MCF 10A (cell line): ENCODE measurements at regions of chr22 and their contacts with region 1.

Region 1: GRCh38 chr22:36546092-36546804 is 17.3 kb upstream of the EIF3D start:
- DNase-seq: peak; percentile 54
- H3K4me3 Mint-ChIP-seq: no peak overlapping the region
- H3K27ac Mint-ChIP-seq: no peak overlapping the region
- H3K4me1 Mint-ChIP-seq: peaks cover 22% of the 10 kb centered on the region
- H3K27me3 Mint-ChIP-seq: peaks cover 17% of the 10 kb centered on the region
- CTCF ChIP-seq: peak; percentile 78

Region 2: DNA sequence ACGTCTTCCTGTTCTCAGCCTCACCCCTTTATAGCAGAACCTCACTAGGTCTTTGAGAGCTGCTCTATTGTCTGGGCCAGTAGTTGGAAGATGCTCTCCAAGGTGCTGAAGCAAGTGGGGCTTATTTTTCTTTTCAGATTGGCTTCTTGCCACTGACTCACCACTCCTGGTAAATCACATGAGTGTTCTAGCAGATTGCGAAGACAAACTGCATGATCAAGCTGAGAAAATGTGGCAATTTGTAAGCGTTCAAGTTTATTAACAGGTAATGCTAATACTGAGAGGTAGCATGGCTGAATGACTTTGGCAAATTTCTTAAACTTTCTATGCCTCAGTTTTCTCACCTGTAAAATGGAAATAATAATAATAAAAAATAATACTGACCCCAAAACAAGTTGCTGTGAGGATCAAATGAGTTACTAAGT is 98.1 kb after region 1 on chr22:
- CTCF ChIA-PET with region 1: interaction called, 4 read pairs
- POLR2A ChIA-PET with region 1: interaction called, 6 read pairs
- intact Hi-C with region 1: loop called (anchors 5 kb)
- DNase-seq: peak; percentile 95
- H3K4me3 Mint-ChIP-seq: no peak overlapping the region
- H3K27ac Mint-ChIP-seq: no peak overlapping the region
- H3K4me1 Mint-ChIP-seq: peaks cover 19% of the 10 kb centered on the region
- H3K27me3 Mint-ChIP-seq: peaks cover 75% of the 10 kb centered on the region
- CTCF ChIP-seq: no peak

Region 3: GRCh38 chr22:36689583-36689982 is 143.3 kb after region 1 on chr22:
- CTCF ChIA-PET with region 1: no interaction called
- POLR2A ChIA-PET with region 1: no interaction called
- intact Hi-C with region 1: no loop called
- DNase-seq: no peak
- H3K4me3 Mint-ChIP-seq: no peak overlapping the region
- H3K27ac Mint-ChIP-seq: no peak overlapping the region
- H3K4me1 Mint-ChIP-seq: no peaks in the 10 kb centered on the region
- H3K27me3 Mint-ChIP-seq: peaks cover 89% of the 10 kb centered on the region
- CTCF ChIP-seq: no peak

Region 4: DNA sequence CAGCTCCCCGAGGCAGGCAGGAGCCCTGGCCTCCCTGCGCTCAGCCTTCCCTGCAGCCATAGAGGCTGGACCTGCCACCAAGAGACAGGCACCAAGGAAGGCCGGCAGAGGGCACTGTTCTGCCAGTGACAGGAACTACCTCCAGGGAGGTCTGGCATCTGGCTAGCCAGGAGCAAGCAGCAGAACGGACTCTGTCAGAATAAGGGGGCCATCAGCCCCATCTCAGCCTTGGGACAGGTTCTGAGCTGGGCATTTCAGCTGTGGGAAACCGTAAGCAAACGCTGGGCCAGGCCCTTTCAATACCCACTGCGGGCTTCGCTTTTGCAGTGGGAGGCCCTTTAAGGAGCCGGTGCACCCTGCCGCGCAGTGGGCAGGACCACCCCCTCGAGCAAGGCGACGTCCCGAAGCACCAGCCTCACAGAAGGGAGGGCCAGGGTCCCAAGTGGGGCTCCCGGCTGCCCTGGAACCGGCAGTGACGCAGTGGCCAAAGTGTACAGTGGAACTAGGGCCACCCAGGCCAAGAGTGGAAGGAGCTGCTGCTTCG is 211.5 kb after region 1 on chr22:
- CTCF ChIA-PET with region 1: interaction called, 27 read pairs
- POLR2A ChIA-PET with region 1: interaction called, 8 read pairs
- intact Hi-C with region 1: loop called (anchors 5 kb)
- DNase-seq: peak; percentile 81
- H3K4me3 Mint-ChIP-seq: no peak overlapping the region
- H3K27ac Mint-ChIP-seq: no peak overlapping the region
- H3K4me1 Mint-ChIP-seq: peaks cover 14% of the 10 kb centered on the region
- H3K27me3 Mint-ChIP-seq: peaks cover 10% of the 10 kb centered on the region
- CTCF ChIP-seq: peak; percentile 66

Region 5: DNA sequence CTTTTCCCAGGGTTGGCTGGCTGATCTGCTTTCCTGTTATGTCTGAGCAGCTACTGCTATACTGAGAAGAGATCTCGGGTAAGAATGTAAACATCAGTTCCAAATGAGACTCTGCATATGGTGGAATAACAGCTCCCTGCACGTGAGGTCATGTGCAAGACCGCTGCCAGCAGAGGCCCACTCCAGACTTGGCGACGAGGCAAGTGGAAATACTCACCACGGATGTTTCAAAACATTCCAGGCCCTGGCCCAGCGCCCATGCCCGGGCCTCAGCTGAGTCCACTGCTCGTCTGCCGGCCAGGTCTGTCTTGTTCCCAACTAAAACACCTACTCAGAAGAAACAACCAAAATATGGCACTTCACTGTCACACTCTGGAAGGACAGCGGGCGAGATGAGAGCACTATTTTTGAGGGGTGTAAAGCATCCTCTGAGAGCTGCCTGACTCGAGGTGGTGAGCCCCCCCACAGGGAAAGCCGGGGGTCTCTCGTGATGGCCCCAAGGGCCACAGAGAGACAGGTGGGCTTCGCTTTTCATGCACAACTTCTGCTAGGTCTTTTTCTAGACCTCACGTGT is 216.5 kb after region 1 on chr22:
- CTCF ChIA-PET with region 1: interaction called, 27 read pairs
- POLR2A ChIA-PET with region 1: interaction called, 8 read pairs
- intact Hi-C with region 1: loop called (anchors 5 kb)
- DNase-seq: peak; percentile 54
- H3K4me3 Mint-ChIP-seq: peak overlapping the region; percentile 12
- H3K27ac Mint-ChIP-seq: peak overlapping the region; percentile 52
- H3K4me1 Mint-ChIP-seq: peaks cover 29% of the 10 kb centered on the region
- H3K27me3 Mint-ChIP-seq: no peaks in the 10 kb centered on the region
- CTCF ChIP-seq: no peak

Region 6: DNA sequence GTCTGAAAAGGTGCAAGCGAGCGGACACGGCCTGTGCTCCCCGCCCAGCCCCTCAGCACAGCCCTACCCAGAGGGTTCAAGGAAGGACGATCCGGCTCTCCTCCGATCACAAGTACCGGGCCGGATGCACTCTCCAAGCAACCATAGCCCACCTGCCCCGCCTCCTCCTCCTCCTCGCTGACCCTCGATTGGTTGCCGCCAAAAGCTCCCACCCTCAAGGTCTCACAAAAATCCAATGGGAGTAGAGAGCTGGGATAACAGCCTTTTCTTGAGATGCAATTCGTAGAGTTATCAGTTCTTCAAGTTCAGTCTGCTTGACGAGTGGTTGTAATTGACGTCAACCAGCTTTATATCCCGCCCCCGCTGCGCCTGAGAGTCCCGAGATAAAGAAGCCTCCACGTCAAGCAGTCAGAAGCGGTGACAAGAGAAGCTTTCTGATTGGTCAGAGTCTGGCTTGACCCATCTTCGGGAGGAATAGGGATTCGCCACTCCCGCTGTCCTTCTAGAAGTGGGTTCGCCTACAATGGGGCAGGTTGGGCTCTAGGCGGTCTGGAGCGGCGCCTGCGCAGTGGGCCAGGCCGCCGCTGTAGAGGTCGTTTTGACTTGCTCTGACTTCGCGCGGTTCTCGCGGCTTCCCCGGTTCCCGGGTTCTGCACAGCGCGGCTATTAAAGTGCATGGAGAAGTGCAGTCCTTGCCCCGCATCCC is 229.9 kb after region 1 on chr22 and contains the start of gene IFT27:
- CTCF ChIA-PET with region 1: interaction called, 80 read pairs
- POLR2A ChIA-PET with region 1: interaction called, 35 read pairs
- intact Hi-C with region 1: loop called (anchors 1 kb)
- DNase-seq: peak; percentile 100
- H3K4me3 Mint-ChIP-seq: peak within 1 kb of the TSS; percentile 84
- H3K27ac Mint-ChIP-seq: peak within 1 kb of the TSS; percentile 79
- H3K4me1 Mint-ChIP-seq: peaks cover 6% of the 10 kb centered on the region
- H3K27me3 Mint-ChIP-seq: no peaks in the 10 kb centered on the region
- CTCF ChIP-seq: no peak
- total RNA-seq, gene IFT27: 17.6 and 28.7 TPM in 2 replicates

Region 7: DNA sequence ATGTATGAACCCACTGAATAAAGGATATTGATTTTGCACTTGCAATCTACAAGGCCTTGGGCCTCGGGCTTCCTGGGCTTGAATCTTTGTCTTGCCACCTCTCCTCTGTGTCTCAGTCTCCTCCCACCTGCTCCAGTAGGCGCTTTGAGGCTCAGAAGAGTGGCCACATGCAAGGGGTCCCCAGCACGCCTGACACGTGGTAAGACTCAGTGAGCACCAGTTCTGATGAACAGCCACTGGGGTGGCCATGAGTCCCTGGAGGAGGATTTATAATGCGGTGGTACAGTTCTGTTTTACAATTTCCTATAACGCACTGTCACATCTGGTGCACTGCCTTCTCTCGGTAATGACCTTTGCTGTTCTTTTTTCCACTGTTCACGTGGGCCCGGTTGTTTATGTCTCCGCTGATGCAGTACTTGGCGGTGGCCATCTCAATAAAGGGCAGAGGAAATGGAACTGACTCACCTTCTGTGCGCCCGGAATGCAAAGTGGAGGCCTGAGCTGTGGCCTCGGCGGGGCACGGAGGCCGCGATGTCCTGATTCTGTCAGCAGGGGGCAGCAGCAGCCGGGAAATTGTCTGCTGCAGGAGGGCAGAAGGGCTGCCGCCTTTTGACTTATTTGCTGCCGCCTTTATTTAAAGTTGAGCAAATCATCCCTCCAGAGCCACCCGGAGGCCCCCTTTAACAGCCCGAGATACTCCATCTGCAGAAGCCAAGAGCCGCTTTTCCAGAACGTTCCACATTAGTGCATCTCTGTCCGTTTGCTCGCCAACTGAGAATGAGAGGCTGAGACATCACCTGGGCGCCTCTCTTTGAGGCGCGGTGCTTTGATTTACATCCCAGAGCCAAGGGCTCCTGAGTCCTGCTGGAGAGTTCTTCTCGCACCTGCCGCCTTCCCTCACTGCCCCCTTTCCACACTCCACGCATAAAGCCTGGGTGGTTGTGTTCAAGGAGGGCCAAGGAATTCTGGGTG is 235.7 kb after region 1 on chr22:
- CTCF ChIA-PET with region 1: interaction called, 80 read pairs
- POLR2A ChIA-PET with region 1: interaction called, 35 read pairs
- intact Hi-C with region 1: no loop called
- DNase-seq: peak; percentile 86
- H3K4me3 Mint-ChIP-seq: no peak overlapping the region
- H3K27ac Mint-ChIP-seq: no peak overlapping the region
- H3K4me1 Mint-ChIP-seq: peaks cover 8% of the 10 kb centered on the region
- H3K27me3 Mint-ChIP-seq: peaks cover 32% of the 10 kb centered on the region
- CTCF ChIP-seq: peak; percentile 84

Region 8: GRCh38 chr22:36977947-36978660 is 431.9 kb after region 1 on chr22:
- CTCF ChIA-PET with region 1: interaction called, 4 read pairs
- POLR2A ChIA-PET with region 1: interaction called, 3 read pairs
- intact Hi-C with region 1: loop called (anchors 2 kb)
- DNase-seq: peak; percentile 87
- H3K4me3 Mint-ChIP-seq: peak overlapping the region; percentile 67
- H3K27ac Mint-ChIP-seq: peak overlapping the region; percentile 73
- H3K4me1 Mint-ChIP-seq: peaks cover 10% of the 10 kb centered on the region
- H3K27me3 Mint-ChIP-seq: no peaks in the 10 kb centered on the region
- CTCF ChIP-seq: peak; percentile 84